ENCODE measurements at regions of chr2 and their contacts with region 1.

Region 1: GRCh38 chr2:40431600-40431955 is 20.3 kb downstream of the SLC8A1 start:
- DNase-seq: peak; percentile 82

Region 2: GRCh38 chr2:40363631-40364030 is 67.9 kb before region 1 on chr2:
- intact Hi-C with region 1: loop called in 1 of 2 experiments (anchors 10 kb)
- DNase-seq: no peak

Region 3: GRCh38 chr2:40448468-40449079 is 17.0 kb after region 1 on chr2:
- intact Hi-C with region 1: no loop called
- DNase-seq: no peak

Region 4: DNA sequence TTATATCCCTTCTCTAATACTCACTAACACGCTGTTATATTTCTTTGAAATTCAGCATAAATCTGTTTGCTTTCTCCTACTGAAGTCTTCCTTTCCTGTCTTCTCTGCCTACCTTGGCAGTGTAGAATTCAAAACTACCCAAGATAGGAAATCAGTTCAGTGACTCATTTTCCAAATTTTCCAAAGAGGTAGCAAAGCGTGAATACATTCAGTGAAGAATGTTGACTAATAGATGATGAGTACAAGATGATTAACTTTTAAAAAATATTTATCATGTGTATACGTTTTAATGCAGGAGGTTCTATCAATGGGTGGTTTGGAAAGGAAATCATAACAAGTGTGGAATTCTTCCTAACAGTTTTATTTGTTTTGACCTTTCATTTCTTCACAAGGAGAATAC is 222.3 kb after region 1 on chr2:
- intact Hi-C with region 1: no loop called
- DNase-seq: no peak

Measured in posterior vena cava (tissue), 2 donors.